ENCODE measurements at regions of chr11 and their contacts with region 1.

Region 1: DNA sequence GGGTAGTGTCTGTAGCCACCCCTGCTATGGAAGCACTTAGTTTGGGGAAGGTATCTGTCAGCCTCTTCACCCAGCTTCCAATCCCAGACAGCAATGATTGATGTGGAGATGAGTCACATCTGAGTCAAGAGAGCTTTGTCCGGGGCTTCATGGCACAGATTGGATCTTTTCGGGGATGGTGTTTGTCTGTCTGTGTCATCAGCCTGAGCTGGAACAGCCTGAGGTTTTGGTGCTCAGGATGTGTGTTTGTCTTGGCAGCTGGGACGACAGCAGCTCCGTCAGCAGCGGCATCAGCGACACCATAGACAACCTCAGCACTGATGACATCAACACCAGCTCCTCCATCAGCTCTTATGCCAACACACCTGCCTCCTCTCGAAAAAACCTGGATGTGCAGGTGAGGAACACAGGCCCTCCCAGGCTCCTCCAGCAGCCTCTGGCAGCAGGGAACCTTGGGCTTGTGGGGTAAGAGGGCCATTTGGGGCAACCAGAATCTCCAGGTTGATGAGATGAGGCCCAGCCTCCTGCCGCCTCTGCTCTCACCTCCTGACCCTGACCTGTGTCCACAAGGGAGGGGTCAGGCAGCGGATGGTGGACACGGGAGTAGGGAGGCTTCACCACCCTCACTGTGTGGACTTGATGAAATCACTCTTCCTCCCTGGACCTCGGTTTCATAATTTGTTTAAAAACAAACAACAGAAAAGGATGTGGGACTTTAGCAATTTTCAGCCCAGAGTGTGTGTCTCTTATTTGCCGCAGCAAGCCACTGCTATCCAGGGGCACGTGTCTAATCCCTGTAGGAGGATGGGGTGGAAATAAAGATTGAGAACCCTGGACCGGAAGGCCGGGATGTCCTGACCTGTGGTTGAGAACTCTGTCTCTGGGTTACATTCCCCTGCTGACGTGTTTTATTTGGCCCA is 124.3 kb downstream of the DBX1 start:
- DNase-seq: no peak
- H3K4me3 Mint-ChIP-seq: no peak overlapping the region
- H3K27ac Mint-ChIP-seq: no peak overlapping the region
- H3K4me1 Mint-ChIP-seq: peaks cover 8% of the 10 kb centered on the region
- H3K27me3 Mint-ChIP-seq: peaks cover 20% of the 10 kb centered on the region

Region 2: GRCh38 chr11:19970944-19971343 is 65.0 kb before region 1 on chr11:
- CTCF ChIA-PET with region 1: no interaction called
- POLR2A ChIA-PET with region 1: no interaction called
- intact Hi-C with region 1: loop called (anchors 2 kb)
- DNase-seq: peak; percentile 68
- H3K4me3 Mint-ChIP-seq: no peak overlapping the region
- H3K27ac Mint-ChIP-seq: no peak overlapping the region
- H3K4me1 Mint-ChIP-seq: peaks cover 15% of the 10 kb centered on the region
- H3K27me3 Mint-ChIP-seq: peaks cover 17% of the 10 kb centered on the region

Region 3: DNA sequence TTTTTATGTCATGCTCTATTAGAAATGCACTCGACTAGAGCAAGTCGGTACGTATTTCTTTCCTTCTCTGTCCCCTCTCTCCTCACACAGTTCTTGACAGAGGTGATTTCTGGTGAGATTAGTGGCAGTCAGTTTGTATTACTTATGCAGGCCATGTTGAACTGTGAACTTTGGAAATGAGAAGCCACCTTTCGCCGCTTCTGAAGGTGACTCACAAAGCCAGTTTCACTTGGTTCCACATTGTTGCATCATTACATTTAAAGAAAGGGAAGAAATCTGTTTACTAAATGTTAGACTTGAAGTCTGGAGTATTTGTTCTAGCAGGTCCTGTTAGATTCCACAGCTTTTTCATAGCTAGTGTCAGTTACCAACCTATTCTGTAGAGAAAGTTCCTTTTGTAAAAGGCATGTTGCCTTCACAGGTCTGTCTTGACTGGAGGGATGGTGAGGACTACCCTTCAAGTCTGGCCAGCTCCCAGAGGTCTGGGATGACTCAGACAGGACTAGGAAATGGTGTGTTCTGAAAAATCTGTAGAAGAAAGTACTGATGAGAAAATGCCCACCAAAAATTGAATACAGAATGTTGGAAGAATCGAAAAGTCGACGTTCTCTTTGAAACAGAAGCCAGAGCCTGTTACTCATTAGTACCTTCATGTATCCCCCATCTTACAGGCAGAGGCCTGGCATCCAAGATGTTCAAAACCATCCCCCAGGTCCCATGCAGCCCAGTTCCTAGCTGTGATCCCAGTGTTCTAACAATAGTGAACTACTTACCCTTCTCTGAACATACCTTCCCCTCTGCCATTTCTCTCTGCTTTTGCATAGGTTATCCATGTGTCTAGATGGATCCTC is 57.1 kb before region 1 on chr11:
- CTCF ChIA-PET with region 1: no interaction called
- POLR2A ChIA-PET with region 1: no interaction called
- intact Hi-C with region 1: loop called (anchors 1 kb)
- DNase-seq: peak; percentile 39
- H3K4me3 Mint-ChIP-seq: no peak overlapping the region
- H3K27ac Mint-ChIP-seq: peak overlapping the region; percentile 26
- H3K4me1 Mint-ChIP-seq: peaks cover 10% of the 10 kb centered on the region
- H3K27me3 Mint-ChIP-seq: peaks cover 3% of the 10 kb centered on the region

Region 4: GRCh38 chr11:20022363-20023081 is 13.4 kb before region 1 on chr11:
- CTCF ChIA-PET with region 1: no interaction called
- POLR2A ChIA-PET with region 1: no interaction called
- intact Hi-C with region 1: no loop called
- DNase-seq: no peak
- H3K4me3 Mint-ChIP-seq: no peak overlapping the region
- H3K27ac Mint-ChIP-seq: no peak overlapping the region
- H3K4me1 Mint-ChIP-seq: no peaks in the 10 kb centered on the region
- H3K27me3 Mint-ChIP-seq: no peaks in the 10 kb centered on the region